Left ventricle myocardium inferior (tissue), 1 donor: ENCODE measurements at regions of chr16 and their contacts with region 1.

Region 1: DNA sequence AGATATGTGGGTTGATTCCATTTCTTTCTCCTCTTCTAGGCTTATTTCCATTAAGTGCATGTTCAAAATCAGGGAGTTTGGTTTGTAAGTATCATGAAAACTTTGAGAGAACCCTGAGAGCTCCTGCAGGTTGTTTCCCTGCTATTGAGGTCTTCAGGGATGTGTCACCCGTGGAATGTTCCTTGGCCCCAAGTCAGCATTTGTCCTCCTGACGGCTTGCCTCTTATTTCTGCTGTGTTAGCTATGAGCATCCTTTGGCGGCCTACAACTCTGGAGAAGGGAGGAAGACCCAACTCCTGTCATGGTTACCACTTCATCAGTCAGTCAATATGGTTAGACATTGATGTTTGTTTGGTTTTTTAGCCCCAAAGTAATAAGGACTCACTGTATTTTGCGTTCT is 180.8 kb downstream of the FTO start:
- DNase-seq: no peak
- H3K4me3 ChIP-seq: no peak overlapping the region
- H3K27ac ChIP-seq: no peak overlapping the region
- H3K4me1 ChIP-seq: no peaks in the 10 kb centered on the region
- H3K27me3 ChIP-seq: no peaks in the 10 kb centered on the region
- CTCF ChIP-seq: no peak

Region 2: DNA sequence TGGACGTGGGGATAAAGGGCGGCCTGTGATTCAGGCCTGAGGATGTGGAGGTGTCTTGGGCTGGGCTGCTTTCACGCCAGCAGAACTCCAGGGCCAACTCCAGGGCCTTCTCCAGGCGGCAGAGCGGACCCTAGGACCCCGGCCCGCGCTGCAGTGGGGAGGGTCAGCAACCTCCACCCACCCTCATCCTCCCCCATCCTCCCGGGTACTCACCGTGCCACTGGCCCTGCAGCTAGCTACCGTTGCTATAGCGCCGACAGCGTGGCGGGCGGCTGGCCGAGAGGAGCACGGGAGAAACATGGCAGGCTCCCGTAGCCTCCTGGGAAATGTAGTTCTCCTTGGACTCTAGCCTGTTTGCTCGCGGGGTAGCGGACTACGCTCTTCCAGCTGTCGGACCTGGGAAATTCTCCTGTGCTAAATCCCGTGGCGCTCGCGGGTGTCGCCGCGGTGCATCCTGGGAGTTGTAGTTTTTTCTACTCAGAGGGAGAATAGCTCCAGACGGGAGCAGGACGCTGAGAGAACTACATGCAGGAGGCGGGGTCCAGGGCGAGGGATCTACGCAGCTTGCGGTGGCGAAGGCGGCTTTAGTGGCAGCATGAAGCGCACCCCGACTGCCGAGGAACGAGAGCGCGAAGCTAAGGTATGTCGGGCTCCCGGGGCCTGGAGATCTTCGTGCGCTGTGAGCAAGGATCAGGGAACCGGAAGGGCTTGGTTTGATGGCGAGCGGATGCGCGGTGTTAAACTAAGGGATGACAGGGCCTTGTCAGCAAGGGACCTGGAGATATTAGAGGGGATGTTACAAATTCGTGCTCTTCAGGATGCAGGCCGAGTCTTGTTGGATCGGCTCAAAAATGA is 180.9 kb before region 1 on chr16 and contains the starts of genes FTO and RPGRIP1L:
- intact Hi-C with region 1: no loop called
- DNase-seq: peak; percentile 98
- H3K4me3 ChIP-seq: peak within 1 kb of the TSS; percentile 86
- H3K27ac ChIP-seq: peak within 1 kb of the TSS; percentile 74
- H3K4me1 ChIP-seq: peaks cover 27% of the 10 kb centered on the region
- H3K27me3 ChIP-seq: no peaks in the 10 kb centered on the region
- CTCF ChIP-seq: peak; percentile 34
- total RNA-seq, gene FTO: 78.4 TPM
- total RNA-seq, gene RPGRIP1L: 1.7 TPM

Region 3: DNA sequence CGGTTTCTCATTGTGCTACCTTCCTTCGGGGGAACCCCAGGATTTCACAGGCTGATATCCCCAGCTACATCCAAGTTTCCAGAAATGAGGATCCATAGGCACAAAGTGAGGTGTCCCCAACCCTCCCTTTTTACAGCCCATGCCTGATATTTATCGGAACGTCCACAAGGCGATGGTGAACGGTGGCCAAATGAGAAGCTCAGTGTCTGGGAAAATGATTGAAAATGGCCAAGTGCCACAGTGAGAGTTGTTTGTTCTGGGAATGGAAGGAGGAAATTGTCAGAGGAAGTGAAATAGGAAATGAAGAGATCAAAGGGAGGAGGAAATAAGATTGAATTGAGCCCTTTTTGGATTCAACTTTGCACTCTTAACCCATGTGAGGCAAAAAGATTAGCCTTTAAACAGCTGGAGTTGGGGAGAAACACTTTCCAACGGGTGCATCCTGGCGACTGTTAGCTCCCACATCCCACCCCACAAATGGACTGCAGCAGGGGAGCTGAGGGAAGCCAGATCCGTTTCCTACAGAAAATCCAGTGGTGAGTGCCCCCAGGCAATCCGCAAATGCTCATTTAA is 751.6 kb after region 1 on chr16:
- intact Hi-C with region 1: loop called (anchors 5 kb)
- DNase-seq: no peak
- H3K4me3 ChIP-seq: no peak overlapping the region
- H3K27ac ChIP-seq: no peak overlapping the region
- H3K4me1 ChIP-seq: no peaks in the 10 kb centered on the region
- H3K27me3 ChIP-seq: no peaks in the 10 kb centered on the region
- CTCF ChIP-seq: no peak